Left ventricle myocardium inferior (tissue), 1 donor: ENCODE measurements at regions of chr14 and their contacts with region 1.

Region 1: GRCh38 chr14:69117020-69117767 is 35.7 kb downstream of the DCAF5 start:
- DNase-seq: no peak
- H3K4me3 ChIP-seq: no peak overlapping the region
- H3K27ac ChIP-seq: no peak overlapping the region
- H3K4me1 ChIP-seq: peaks cover 39% of the 10 kb centered on the region
- H3K27me3 ChIP-seq: no peaks in the 10 kb centered on the region
- CTCF ChIP-seq: no peak

Region 2: GRCh38 chr14:68621400-68622365 is 495.5 kb before region 1 on chr14:
- intact Hi-C with region 1: no loop called
- DNase-seq: peak; percentile 60
- H3K4me3 ChIP-seq: no peak overlapping the region
- H3K27ac ChIP-seq: peak overlapping the region; percentile 81
- H3K4me1 ChIP-seq: peaks cover 44% of the 10 kb centered on the region
- H3K27me3 ChIP-seq: no peaks in the 10 kb centered on the region
- CTCF ChIP-seq: no peak

Region 3: DNA sequence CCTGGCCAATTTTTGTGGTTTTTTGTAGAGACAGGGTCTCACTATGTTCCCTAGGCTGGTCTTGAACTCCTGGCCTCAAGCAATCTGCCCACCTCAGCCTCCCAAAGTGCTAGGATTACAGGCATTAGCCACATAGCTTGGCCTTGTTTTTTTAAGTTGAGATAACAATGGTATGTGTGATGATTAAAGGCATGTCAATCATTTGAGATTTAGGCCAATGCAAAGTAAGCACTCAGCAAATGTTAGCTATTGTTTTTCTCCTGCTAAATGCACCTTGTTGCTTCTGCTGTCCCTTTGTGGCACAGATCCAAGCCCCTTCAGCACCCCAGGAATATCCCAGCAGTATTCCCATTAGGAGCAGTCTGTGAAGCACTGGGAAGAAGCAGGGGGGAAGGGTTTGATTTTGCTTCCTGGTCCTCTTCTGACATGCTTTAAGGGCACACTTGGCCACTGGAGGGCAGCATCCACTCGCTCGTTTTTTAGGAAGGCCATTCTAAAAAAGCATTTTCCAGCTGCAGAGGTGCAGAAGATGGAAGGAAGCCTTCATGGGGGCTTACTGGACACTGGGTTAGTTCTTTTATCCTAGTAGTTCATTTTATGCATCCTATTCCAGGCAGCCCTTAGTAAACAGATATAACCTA is 254.1 kb before region 1 on chr14:
- intact Hi-C with region 1: loop called (anchors 10 kb)
- DNase-seq: peak; percentile 76
- H3K4me3 ChIP-seq: no peak overlapping the region
- H3K27ac ChIP-seq: no peak overlapping the region
- H3K4me1 ChIP-seq: no peaks in the 10 kb centered on the region
- H3K27me3 ChIP-seq: no peaks in the 10 kb centered on the region
- CTCF ChIP-seq: peak; percentile 84